ENCODE measurements at regions of chr19 and their contacts with region 1.

Region 1: GRCh38 chr19:5904352-5905113 is at the start of gene VMAC:
- DNase-seq: peak; percentile 98 to 99
- H3K4me3 ChIP-seq: peak within 1 kb of the TSS; percentile 97
- H3K27ac ChIP-seq: peak within 1 kb of the TSS; percentile 89
- H3K4me1 ChIP-seq: peaks cover 7% of the 10 kb centered on the region; the same call in 1 of the 2 replicates
- H3K27me3 ChIP-seq: no peaks in the 10 kb centered on the region
- CTCF ChIP-seq: no peak
- total RNA-seq, gene VMAC: 6.2 and 7.1 TPM in 2 replicates

Region 2: GRCh38 chr19:5827891-5828660 is 76.5 kb before region 1 on chr19:
- CTCF ChIA-PET with region 1: no interaction called
- POLR2A ChIA-PET with region 1: interaction called, 18 read pairs
- intact Hi-C with region 1: no loop called
- DNase-seq: peak; percentile 75 to 94
- H3K4me3 ChIP-seq: peak overlapping the region; percentile 85
- H3K27ac ChIP-seq: peak overlapping the region; percentile 58
- H3K4me1 ChIP-seq: 0 out of 2 replicates have a peak, but pooled peaks cover 9% of the 10 kb centered on the region
- H3K27me3 ChIP-seq: no peaks in the 10 kb centered on the region
- CTCF ChIP-seq: no peak

Region 3: DNA sequence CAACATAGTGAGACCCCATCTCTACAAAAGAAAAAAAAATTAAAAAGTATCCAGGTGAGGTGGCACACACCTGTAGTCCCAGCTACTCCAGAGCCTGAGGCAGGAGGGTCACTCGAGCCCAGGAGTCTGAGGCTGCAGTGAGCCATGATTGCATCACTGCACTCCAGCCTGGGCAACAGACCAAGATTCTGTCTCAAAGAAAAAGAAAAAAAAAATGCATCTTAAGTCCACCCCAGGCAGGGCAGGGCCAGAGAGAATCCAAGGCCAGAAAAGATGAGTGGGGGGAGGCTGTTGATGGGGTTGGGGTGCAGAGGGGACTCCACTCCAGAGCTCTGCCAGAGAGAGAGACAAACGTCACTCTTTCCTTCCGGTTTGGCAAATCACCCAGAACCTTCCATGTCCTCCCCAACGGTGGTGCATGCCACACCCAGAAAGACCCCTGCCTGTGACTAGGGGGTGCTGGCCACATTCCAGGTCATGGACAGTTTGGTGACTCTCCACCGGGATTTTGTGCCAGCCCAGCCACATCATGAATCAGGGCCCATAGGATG is 53.7 kb before region 1 on chr19:
- CTCF ChIA-PET with region 1: no interaction called
- POLR2A ChIA-PET with region 1: interaction called, 11 read pairs
- intact Hi-C with region 1: loop called (anchors 2 kb)
- DNase-seq: peak; percentile 66 to 78
- H3K4me3 ChIP-seq: peak overlapping the region; percentile 73
- H3K27ac ChIP-seq: peak overlapping the region; percentile 98
- H3K4me1 ChIP-seq: peaks cover 29% of the 10 kb centered on the region
- H3K27me3 ChIP-seq: no peaks in the 10 kb centered on the region
- CTCF ChIP-seq: no peak

Region 4: GRCh38 chr19:5967994-5968430 is 63.5 kb after region 1 on chr19:
- CTCF ChIA-PET with region 1: interaction called, 10 read pairs
- POLR2A ChIA-PET with region 1: no interaction called
- intact Hi-C with region 1: no loop called
- DNase-seq: peak in 1 of 2 experiments; percentile 46
- H3K4me3 ChIP-seq: no peak overlapping the region
- H3K27ac ChIP-seq: no peak overlapping the region
- H3K4me1 ChIP-seq: no peaks in the 10 kb centered on the region
- H3K27me3 ChIP-seq: no peaks in the 10 kb centered on the region
- CTCF ChIP-seq: peak; percentile 79

Region 5: GRCh38 chr19:6201996-6202395 is 297.5 kb after region 1 on chr19:
- CTCF ChIA-PET with region 1: interaction called, 10 read pairs
- POLR2A ChIA-PET with region 1: no interaction called
- intact Hi-C with region 1: no loop called
- DNase-seq: peak in 1 of 2 experiments; percentile 89
- H3K4me3 ChIP-seq: no peak overlapping the region
- H3K27ac ChIP-seq: peak overlapping the region; percentile 39; the same call in 1 of the 2 replicates
- H3K4me1 ChIP-seq: no peaks in the 10 kb centered on the region
- H3K27me3 ChIP-seq: no peaks in the 10 kb centered on the region
- CTCF ChIP-seq: no peak